Left ventricle myocardium inferior (tissue), 1 donor: ENCODE measurements at regions of chr19 and their contacts with region 1.

Region 1: GRCh38 chr19:4781801-4782200 is 9.7 kb upstream of the FEM1A start:
- DNase-seq: no peak
- H3K4me3 ChIP-seq: no peak overlapping the region
- H3K27ac ChIP-seq: no peak overlapping the region
- H3K4me1 ChIP-seq: no peaks in the 10 kb centered on the region
- H3K27me3 ChIP-seq: peaks cover 9% of the 10 kb centered on the region
- CTCF ChIP-seq: no peak

Region 2: DNA sequence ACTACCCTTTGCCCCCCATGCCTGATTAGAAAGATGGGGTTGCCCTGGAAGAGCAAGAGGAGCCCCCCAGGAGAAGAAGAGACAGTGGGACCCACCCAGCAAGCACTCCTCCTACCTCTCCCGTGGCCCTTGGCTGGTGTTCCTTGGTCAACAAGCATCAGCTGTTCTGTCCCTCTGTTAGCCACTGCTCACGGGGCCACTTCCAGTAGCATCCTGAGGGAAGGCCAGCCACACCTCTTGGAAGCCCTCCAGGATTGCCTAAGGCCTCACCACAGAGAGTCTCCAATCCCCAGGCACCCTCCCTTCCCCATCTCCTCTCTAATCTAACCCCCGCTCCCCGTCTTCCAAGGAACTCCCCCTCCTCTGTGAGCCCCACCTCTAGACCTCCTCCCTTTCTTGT is 43.1 kb before region 1 on chr19:
- intact Hi-C with region 1: loop called (anchors 5 kb)
- DNase-seq: no peak
- H3K4me3 ChIP-seq: no peak overlapping the region
- H3K27ac ChIP-seq: no peak overlapping the region
- H3K4me1 ChIP-seq: peaks cover 13% of the 10 kb centered on the region
- H3K27me3 ChIP-seq: peaks cover 19% of the 10 kb centered on the region
- CTCF ChIP-seq: no peak